Uterus (tissue), 4 donors: ENCODE measurements at regions of chr7 and their contacts with region 1.

Region 1: DNA sequence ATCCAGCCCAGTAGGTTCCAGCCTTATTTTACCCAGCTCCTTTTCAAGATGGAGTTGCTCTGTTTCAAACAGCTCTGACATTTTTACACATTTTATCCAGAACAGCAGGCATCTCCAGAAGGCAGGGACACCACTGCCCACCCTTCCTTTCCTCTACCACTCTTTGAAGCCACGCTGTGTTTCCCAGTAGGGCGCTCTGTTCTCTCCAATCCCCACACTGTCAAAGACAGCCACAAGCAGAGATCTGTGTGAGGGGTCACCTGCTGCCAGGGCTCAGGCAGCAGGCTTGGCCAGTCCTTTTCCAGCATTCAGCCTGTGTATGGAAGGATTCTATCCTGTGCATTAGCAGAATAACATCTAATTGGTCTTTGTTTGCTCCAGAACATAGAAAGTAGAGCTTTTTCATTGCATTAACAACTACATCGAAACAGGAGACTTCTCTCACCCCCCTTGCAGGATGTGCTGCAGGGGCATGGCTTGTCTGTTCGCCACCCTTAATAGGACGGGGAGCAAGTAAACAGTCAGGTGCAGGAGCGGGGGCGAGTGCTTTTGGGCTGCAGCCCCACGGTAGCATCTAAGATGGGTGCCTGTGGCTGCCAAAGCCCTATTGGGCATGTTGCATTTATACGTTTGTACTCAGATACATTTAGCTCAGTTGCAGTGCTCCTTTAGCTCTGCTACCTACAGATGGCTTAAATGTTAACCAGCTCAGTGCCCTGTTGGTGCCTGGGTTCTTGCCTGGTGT is 326.1 kb downstream of the GALNT17 start:
- DNase-seq: no peak
- H3K4me3 ChIP-seq: no peak overlapping the region
- H3K27ac ChIP-seq: no peak overlapping the region
- H3K4me1 ChIP-seq: no peaks in the 10 kb centered on the region
- H3K27me3 ChIP-seq: no peaks in the 10 kb centered on the region
- CTCF ChIP-seq: no peak
- POLR2A ChIP-seq: no peak

Region 2: DNA sequence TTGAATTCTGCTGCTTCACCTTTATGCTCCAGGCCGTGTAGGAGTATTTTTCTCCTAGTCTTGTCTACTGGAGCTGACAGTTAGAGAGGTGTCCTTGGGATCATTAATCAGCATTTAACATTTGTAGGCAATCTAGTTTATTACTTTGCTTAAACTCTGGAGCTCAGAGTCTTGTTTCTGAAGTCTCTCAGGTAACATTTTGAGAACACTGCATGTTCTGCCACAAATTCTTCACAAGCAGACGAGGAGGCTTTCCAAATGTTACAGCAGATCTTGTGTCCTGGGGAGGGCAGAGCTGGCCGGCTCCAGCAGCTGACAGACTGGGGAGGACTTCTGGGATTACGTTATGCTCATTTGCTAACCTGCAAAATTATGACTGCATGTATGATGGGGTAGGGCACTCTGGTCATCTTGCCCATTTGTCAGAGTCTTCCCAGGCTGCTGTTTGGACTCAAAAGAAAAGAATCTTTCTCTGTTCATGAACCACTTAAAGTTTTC is 275.5 kb before region 1 on chr7:
- intact Hi-C with region 1: no loop called
- DNase-seq: no peak
- H3K4me3 ChIP-seq: no peak overlapping the region
- H3K27ac ChIP-seq: no peak overlapping the region
- H3K4me1 ChIP-seq: no peaks in the 10 kb centered on the region
- H3K27me3 ChIP-seq: no peaks in the 10 kb centered on the region
- CTCF ChIP-seq: no peak
- POLR2A ChIP-seq: no peak

Region 3: GRCh38 chr7:71538210-71538609 is 80.2 kb after region 1 on chr7:
- intact Hi-C with region 1: loop called (anchors 10 kb)
- DNase-seq: no peak
- H3K4me3 ChIP-seq: no peak overlapping the region
- H3K27ac ChIP-seq: no peak overlapping the region
- H3K4me1 ChIP-seq: no peaks in the 10 kb centered on the region
- H3K27me3 ChIP-seq: no peaks in the 10 kb centered on the region
- CTCF ChIP-seq: no peak
- POLR2A ChIP-seq: no peak